A549 (cell line): ENCODE measurements at regions of chr2 and their contacts with region 1.

Region 1: DNA sequence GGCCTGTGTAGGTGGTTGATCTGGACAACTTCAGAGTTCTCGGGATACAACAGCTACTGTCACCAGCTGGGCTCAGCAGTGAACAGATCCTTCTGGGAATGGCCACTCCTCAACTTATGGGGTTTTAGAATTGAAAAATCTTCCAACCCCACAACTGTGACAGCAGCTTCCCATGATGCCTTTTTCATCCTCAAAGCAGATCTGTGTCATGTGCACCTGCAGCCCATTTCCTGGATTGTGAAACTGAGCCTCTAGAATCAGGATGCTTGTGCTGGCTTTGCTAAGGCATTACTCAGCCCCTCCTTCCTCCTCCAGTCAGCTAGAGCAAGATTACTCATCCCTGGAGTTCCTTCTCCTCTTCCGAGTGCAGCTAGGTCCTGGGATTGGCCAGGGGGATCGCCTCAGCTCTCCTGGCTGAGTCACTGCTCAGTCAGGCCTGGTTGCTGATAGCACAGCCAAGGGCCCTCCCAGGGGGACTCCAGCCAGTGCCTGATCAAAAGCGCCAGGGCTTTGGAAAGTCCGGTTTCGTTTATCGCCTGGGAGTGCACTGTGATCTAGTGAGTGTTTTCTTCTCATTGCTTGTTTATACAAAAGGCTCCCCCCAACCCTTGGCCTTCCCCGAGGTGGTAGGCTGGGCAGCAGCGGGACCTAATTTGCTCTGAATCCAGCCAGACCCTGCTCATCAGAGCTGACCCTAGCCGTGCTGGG is 2.4 kb upstream of the LPIN1 start:
- DNase-seq: peak; percentile 99 to 100
- ATAC-seq: peak; percentile 87 to 96
- H3K4me3 ChIP-seq: peak overlapping the region; percentile 24; the same call in 1 of the 3 replicates
- H3K27ac ChIP-seq: peak overlapping the region; percentile 86 to 90
- H3K4me1 ChIP-seq: peaks cover 48% of the 10 kb centered on the region
- CTCF ChIP-seq: 0 out of 3 replicates have a peak, but pooled peaks have one; percentile 32
- EP300 ChIP-seq: peak in 1 of 2 experiments; percentile 44; a peak in 1 of 5 replicates
- POLR2A ChIP-seq: no peak
- RAD21 ChIP-seq: 0 out of 5 replicates have a peak, but pooled peaks of 1 of the 2 experiments have one; percentile 19

Region 2: GRCh38 chr2:11697103-11697871 is 46.7 kb before region 1 on chr2:
- CTCF ChIA-PET with region 1: interaction called, 25 read pairs
- POLR2A ChIA-PET with region 1: interaction called, 10 read pairs
- DNase-seq: peak; percentile 32 to 68
- ATAC-seq: peak; percentile 61 to 72
- H3K4me3 ChIP-seq: no peak overlapping the region
- H3K27ac ChIP-seq: peak overlapping the region; percentile 68 to 81
- H3K4me1 ChIP-seq: peaks cover 23% of the 10 kb centered on the region
- CTCF ChIP-seq: no peak
- EP300 ChIP-seq: no peak
- POLR2A ChIP-seq: no peak
- RAD21 ChIP-seq: no peak

Region 3: GRCh38 chr2:11863513-11864328 is 119.7 kb after region 1 on chr2:
- CTCF ChIA-PET with region 1: no interaction called
- POLR2A ChIA-PET with region 1: no interaction called
- DNase-seq: peak; percentile 73 to 87
- ATAC-seq: peak; percentile 88 to 95
- H3K4me3 ChIP-seq: peak overlapping the region; percentile 19; the same call in 1 of the 3 replicates
- H3K27ac ChIP-seq: 0 out of 6 replicates have a peak overlapping the region, but pooled peaks of 1 of the 2 experiments have one; percentile 24
- H3K4me1 ChIP-seq: no peaks in the 10 kb centered on the region
- CTCF ChIP-seq: peak; percentile 89
- EP300 ChIP-seq: no peak
- POLR2A ChIP-seq: no peak
- RAD21 ChIP-seq: peak; percentile 85 to 86